ENCODE measurements at regions of chr1 and their contacts with region 1.

Region 1: DNA sequence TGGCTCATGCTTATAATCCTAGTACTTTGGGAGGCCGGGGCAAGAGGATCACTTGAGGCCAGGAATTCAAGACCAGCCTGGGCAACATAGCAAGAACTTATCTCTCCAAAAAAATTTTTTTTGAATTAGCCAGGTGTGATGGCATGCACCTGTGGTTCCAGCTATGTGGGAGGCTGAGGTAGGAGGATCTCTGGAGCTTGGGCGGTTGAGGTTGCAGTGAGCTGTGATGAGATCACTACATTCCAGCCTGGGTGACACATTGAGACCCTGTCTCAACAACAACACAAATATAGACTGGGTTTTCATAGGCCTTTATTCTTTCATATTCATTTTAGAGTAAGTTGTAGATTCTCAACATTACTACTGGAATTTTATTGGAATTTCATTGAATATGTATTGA is 12.8 kb downstream of the MED18 start:
- DNase-seq: peak in 1 of 2 experiments; percentile 60
- H3K4me3 ChIP-seq: no peak overlapping the region
- H3K27ac ChIP-seq: no peak overlapping the region
- H3K4me1 ChIP-seq: peaks cover 7% of the 10 kb centered on the region; the same call in 1 of the 2 replicates
- H3K27me3 ChIP-seq: no peaks in the 10 kb centered on the region
- CTCF ChIP-seq: no peak

Region 2: DNA sequence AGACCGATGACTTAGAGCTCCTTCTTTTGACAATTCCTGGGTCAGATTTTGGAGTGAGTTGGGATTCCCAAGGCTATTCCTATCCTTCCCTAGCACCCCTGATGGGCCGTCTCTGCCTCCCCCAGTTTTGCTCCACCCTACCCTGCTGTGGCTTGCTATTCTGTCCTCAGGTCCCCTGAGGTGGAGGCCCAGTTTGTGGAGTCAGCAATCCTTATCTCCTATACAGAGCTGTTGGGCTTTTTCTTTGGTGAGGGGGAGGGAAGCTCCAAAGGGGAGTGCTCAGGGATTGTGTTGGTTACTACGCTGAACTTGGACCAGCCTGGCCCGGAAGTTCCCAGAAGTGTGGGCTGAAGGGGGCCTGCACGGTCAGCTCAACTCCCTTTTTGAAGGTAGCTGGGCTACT is 74.7 kb before region 1 on chr1:
- CTCF ChIA-PET with region 1: no interaction called
- POLR2A ChIA-PET with region 1: interaction called, 10 read pairs
- intact Hi-C with region 1: no loop called
- DNase-seq: no peak
- H3K4me3 ChIP-seq: no peak overlapping the region
- H3K27ac ChIP-seq: no peak overlapping the region
- H3K4me1 ChIP-seq: peaks cover 4% of the 10 kb centered on the region; the same call in 1 of the 2 replicates
- H3K27me3 ChIP-seq: no peaks in the 10 kb centered on the region
- CTCF ChIP-seq: no peak

Measured in PC-9 (cell line).